GM12878 (cell line): ENCODE measurements at regions of chr3 and their contacts with region 1.

Region 1: GRCh38 chr3:122030381-122031122 is 8.5 kb upstream of the ILDR1 start:
- DNase-seq: peak; percentile 74
- ATAC-seq: peak; percentile 86
- H3K4me3 ChIP-seq: peak overlapping the region; percentile 41; the same call in 1 of the 2 replicates
- H3K27ac ChIP-seq: peak overlapping the region; percentile 89
- H3K4me1 ChIP-seq: peaks cover 37% of the 10 kb centered on the region
- H3K27me3 ChIP-seq: no peaks in the 10 kb centered on the region
- CTCF ChIP-seq: no peak
- EP300 ChIP-seq: no peak
- POLR2A ChIP-seq: 0 out of 2 replicates have a peak, but pooled peaks have one; percentile 25
- RAD21 ChIP-seq: peak; percentile 11; the same call in 1 of the 2 replicates

Region 2: DNA sequence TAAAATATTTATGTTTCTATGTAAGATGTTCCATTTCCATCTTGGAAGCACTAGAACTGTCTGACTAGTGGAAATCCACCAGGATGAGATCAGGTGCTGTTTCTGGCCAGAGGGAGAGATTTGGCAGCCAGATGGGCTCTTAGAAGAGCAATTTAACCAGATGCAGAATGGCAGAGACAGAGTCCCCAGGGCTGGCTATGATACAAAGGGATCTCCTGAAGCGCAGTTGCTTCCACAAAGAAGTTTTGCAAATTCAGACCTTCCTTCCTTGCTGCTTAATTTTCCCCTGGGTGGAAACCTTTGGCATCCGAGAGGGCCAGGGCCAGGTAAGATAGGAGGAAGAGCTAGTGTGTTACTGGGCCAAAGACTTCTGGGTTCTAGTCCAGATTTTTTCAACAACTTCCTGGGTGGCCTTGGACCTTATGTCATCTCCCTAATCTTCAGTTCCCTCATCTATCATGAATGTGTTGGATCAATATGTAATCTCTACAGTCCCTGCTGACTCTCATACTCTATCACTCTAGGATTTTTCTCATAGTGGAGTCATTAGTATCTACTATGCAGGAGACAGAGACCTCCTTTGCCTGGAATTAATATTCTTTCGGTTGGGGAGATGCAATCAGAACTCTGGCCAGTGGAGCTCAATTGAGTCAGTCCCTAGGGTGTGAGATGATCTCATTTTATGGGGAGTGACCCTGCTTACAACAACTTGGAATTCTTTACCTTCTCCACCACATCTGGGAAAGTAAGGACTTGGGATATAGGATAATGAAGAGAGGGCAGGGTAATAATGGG is 1475.5 kb before region 1 on chr3:
- CTCF ChIA-PET with region 1: no interaction called
- POLR2A ChIA-PET with region 1: no interaction called
- RAD21 ChIA-PET with region 1: no interaction called
- SMC1A ChIA-PET with region 1: no interaction called
- in situ Hi-C with region 1: no loop called
- intact Hi-C with region 1: no loop called
- DNase-seq: no peak
- ATAC-seq: no peak
- H3K4me3 ChIP-seq: no peak overlapping the region
- H3K27ac ChIP-seq: no peak overlapping the region
- H3K4me1 ChIP-seq: peaks cover 3% of the 10 kb centered on the region; the same call in 1 of the 2 replicates
- H3K27me3 ChIP-seq: no peaks in the 10 kb centered on the region
- CTCF ChIP-seq: no peak
- EP300 ChIP-seq: no peak
- POLR2A ChIP-seq: no peak
- RAD21 ChIP-seq: no peak

Region 3: GRCh38 chr3:122014741-122015140 is 15.8 kb before region 1 on chr3:
- CTCF ChIA-PET with region 1: interaction called, 14 read pairs
- POLR2A ChIA-PET with region 1: interaction called, 22 read pairs
- RAD21 ChIA-PET with region 1: interaction called, 39 read pairs
- SMC1A ChIA-PET with region 1: interaction called, 454 read pairs
- in situ Hi-C with region 1: no loop called
- intact Hi-C with region 1: loop called (anchors 1 kb)
- DNase-seq: peak; percentile 91
- ATAC-seq: peak; percentile 80
- H3K4me3 ChIP-seq: peak overlapping the region; percentile 18; the same call in 1 of the 2 replicates
- H3K27ac ChIP-seq: peak overlapping the region; percentile 60
- H3K4me1 ChIP-seq: peaks cover 72% of the 10 kb centered on the region
- H3K27me3 ChIP-seq: no peaks in the 10 kb centered on the region
- CTCF ChIP-seq: no peak
- EP300 ChIP-seq: peak; percentile 81 to 86; a peak in 3 of 4 replicates
- POLR2A ChIP-seq: no peak
- RAD21 ChIP-seq: no peak

Region 4: GRCh38 chr3:122169908-122170307 is 139.4 kb after region 1 on chr3:
- CTCF ChIA-PET with region 1: no interaction called
- POLR2A ChIA-PET with region 1: no interaction called
- RAD21 ChIA-PET with region 1: no interaction called
- SMC1A ChIA-PET with region 1: no interaction called
- in situ Hi-C with region 1: no loop called
- intact Hi-C with region 1: no loop called
- DNase-seq: no peak
- ATAC-seq: no peak
- H3K4me3 ChIP-seq: no peak overlapping the region
- H3K27ac ChIP-seq: no peak overlapping the region
- H3K4me1 ChIP-seq: no peaks in the 10 kb centered on the region
- H3K27me3 ChIP-seq: no peaks in the 10 kb centered on the region
- CTCF ChIP-seq: no peak
- EP300 ChIP-seq: no peak
- POLR2A ChIP-seq: no peak
- RAD21 ChIP-seq: no peak

Region 5: GRCh38 chr3:122200661-122201060 is 170.1 kb after region 1 on chr3:
- CTCF ChIA-PET with region 1: no interaction called
- POLR2A ChIA-PET with region 1: no interaction called
- RAD21 ChIA-PET with region 1: no interaction called
- SMC1A ChIA-PET with region 1: no interaction called
- in situ Hi-C with region 1: no loop called
- intact Hi-C with region 1: no loop called
- DNase-seq: no peak
- ATAC-seq: no peak
- H3K4me3 ChIP-seq: no peak overlapping the region
- H3K27ac ChIP-seq: no peak overlapping the region
- H3K4me1 ChIP-seq: no peaks in the 10 kb centered on the region
- H3K27me3 ChIP-seq: no peaks in the 10 kb centered on the region
- CTCF ChIP-seq: no peak
- EP300 ChIP-seq: no peak
- POLR2A ChIP-seq: no peak
- RAD21 ChIP-seq: no peak

Region 6: DNA sequence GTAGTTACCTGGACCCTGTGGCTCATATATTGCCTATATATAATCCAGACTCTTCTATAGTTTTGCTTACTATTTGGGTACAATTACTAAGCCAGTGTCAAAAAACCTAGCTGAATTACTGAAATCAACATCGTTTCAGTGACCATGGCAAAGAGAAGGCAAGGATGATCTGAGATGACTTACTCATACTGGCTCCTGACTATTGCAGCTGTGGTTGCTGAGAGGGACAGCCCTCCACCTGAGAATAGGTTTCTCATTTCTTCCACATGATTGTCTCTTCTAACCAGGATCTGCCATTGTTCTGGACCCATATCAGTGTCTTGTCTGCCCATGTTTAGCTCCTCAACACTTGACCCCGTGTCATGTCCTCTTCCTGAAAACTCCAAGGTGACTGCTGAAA is 183.1 kb after region 1 on chr3:
- CTCF ChIA-PET with region 1: no interaction called
- POLR2A ChIA-PET with region 1: no interaction called
- RAD21 ChIA-PET with region 1: no interaction called
- SMC1A ChIA-PET with region 1: no interaction called
- in situ Hi-C with region 1: no loop called
- intact Hi-C with region 1: no loop called
- DNase-seq: no peak
- ATAC-seq: no peak
- H3K4me3 ChIP-seq: no peak overlapping the region
- H3K27ac ChIP-seq: no peak overlapping the region
- H3K4me1 ChIP-seq: 0 out of 2 replicates have a peak, but pooled peaks cover 2% of the 10 kb centered on the region
- H3K27me3 ChIP-seq: no peaks in the 10 kb centered on the region
- CTCF ChIP-seq: no peak
- EP300 ChIP-seq: no peak
- POLR2A ChIP-seq: no peak
- RAD21 ChIP-seq: no peak